Left cardiac atrium (tissue), 4 donors: ENCODE measurements at regions of chr1 and their contacts with region 1.

Region 1: DNA sequence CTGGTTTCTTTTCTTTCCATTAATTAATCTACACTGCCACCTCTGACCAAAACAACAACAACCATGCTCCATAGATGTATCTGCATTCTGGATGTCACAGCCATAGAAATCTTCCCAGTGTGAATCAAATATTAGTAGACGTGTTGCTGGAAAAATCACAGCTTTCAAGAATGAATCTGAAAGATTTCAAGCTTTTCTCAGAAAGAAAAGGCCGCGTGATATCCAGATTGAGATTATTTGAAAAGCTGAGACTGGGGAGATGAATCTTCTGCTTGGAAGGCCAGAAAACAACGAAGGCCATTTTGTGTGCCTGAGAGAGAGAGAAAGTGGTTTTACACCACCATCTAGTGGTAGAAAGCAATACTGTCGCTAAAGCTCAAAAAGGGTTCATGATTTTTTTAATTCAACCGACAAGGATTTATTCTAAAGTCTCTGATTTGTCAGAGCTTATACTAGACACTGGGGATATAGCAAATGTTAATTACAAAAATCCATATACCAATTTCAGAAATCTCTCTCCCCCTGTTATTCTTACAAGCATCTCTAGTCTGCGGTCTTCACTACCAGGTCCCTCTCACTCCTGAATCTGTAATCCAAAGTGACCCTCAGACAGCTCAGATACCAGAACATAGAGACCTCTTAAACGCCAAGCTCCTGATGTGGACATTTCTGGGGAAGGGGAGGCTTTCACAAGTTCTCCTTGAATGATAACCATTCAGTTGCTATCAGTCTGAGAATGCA is 87.5 kb upstream of the SGIP1 start:
- DNase-seq: no peak
- ATAC-seq: peak; percentile 73

Region 2: GRCh38 chr1:65958561-65959350 is 487.7 kb before region 1 on chr1:
- intact Hi-C with region 1: loop called (anchors 5 to 10 kb)
- DNase-seq: peak; percentile 23
- ATAC-seq: peak in 1 of 2 donors; percentile 49

Region 3: DNA sequence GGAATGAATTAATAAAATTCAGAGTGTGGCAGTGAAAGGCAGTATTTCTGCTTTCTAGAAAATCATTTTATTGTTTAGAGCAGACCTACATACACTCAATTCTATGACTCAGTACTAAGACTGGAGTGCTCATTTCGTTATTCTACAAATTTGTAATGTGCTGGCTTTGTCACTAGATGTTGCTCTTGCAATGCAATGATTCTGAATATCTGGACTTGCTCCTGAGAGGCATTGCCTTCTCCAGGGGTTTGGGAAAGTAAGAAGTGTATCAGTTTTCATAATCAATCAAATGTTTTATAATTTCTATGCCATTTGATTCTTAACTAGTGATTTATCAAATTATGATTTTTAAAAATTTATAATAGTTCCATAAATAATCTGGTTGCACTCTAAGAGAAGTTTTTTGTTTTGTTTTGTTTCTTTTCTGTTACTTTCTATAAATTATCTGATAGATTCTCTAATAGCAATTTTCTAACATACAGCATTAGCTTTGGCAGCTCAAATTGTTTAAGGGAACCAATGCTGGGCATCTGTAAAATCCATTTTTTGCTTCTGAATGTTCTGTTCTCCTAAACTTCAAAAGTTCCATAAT is 193.0 kb before region 1 on chr1:
- intact Hi-C with region 1: loop called (anchors 1 to 5 kb)
- DNase-seq: no peak
- ATAC-seq: peak; percentile 90 to 95

Region 4: DNA sequence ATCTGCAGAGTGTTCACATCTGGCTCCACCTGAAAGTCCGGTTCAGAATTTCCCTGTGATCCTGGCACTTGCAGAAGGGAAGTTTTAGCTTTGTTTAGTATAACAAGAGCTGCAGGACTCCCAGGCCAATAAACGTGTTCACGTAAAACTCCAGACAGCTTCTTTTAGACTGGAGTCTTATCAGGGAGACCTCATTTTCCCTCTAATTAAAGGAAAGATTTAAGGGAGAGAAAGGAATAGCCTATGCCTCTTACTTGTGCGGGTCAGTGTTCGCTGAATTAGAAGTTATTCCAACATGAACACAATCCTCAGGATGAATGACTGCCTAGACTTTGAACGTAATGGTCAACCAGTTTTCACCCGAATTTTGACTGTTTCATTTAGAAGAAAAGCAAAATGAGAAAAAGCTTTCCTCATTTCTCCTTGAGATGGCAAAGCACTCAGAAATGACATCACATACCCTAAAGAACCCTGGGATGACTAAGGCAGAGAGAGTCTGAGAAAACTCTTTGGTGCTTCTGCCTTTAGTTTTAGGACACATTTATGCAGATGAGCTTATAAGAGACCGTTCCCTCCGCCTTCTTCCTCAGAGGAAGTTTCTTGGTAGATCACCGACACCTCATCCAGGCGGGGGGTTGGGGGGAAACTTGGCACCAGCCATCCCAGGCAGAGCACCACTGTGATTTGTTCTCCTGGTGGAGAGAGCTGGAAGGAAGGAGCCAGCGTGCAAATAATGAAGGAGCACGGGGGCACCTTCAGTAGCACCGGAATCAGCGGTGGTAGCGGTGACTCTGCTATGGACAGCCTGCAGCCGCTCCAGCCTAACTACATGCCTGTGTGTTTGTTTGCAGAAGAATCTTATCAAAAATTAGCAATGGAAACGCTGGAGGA is 114.5 kb before region 1 on chr1:
- intact Hi-C with region 1: loop called in 1 of 2 experiments (anchors 2 kb)
- DNase-seq: peak; percentile 80
- ATAC-seq: peak; percentile 66 to 75

Region 5: GRCh38 chr1:66503841-66504470 is 57.5 kb after region 1 on chr1:
- intact Hi-C with region 1: loop called in 1 of 2 experiments (anchors 5 kb)
- DNase-seq: no peak
- ATAC-seq: peak; percentile 67 to 81